Left cardiac atrium (tissue), 4 donors: ENCODE measurements at regions of chr1 and their contacts with region 1.

Region 1: GRCh38 chr1:53326088-53326597 is 1.7 kb downstream of the LRP8 start:
- DNase-seq: peak; percentile 91
- ATAC-seq: peak; percentile 92 to 95

Region 2: GRCh38 chr1:53061859-53062707 is 264.1 kb before region 1 on chr1 and contains the start of gene PODN:
- intact Hi-C with region 1: no loop called
- DNase-seq: peak; percentile 56
- ATAC-seq: peak; percentile 49 to 65
- total RNA-seq, gene PODN: 28.6 to 84.9 TPM

Region 3: DNA sequence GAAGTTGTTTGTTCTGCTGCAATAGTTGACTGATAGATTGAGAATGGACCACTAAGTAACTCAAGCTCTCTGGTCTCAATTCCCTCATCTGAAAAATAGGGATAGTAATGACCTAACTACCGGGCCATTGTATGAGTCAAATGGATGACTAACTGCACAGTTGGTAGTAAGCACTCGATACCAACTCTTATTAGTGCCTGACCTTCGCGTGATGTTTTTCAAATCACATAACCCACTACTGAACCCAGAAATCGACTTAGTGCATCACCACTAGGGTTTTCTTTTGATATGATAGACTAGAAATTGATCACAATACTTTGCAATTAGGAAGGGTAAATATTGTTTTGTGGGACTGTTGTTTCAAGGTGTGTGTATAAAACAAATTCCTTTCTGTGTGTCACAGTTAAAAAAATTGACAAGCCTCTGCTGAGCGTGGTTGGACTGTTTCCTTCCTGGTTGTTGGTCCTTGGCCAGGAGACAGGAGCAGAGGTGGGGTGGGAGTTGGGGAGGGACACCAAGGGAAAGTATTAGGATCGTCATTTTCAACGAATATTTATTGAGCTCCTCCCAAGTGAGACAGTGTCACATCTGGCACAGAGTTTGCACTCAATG is 55.8 kb after region 1 on chr1:
- intact Hi-C with region 1: loop called in 1 of 2 experiments (anchors 10 kb)
- DNase-seq: no peak
- ATAC-seq: no peak